Endothelial cell of umbilical vein (primary cell): ENCODE measurements at regions of chr2 and their contacts with region 1.

Region 1: DNA sequence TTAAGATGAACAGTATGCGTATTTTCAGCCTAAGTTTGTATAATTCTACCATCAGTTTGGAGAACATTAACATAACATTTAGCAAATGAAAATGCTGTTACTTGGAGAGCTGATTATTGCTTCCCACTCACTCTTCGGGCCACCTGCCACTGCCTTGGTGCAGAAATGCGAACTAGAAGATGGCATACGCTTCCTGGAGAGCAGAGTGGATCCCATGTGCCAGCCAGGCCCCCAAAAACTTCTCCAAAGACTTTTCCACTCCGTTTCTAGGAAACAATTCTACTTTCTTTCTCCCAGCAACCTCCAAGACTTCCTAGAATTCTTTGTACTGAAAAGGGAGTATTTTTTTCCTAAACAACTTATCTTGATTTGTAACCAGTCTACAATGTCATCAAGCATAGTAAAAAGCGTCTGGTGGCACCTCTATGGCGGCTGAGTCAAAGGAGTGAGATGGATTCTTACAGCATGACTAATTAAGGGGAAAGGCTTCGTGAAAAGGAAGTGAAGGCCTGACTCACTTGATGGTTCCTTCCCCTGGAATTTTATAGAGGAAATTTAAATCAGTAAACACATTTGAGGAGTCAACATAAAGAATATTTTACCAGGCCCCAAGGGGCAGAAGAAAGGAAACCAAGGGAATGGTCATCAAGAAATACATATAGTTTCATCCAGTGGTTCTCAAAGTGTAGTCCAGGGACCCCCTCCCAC is 36.6 kb downstream of the FEZ2 start:
- DNase-seq: peak; percentile 98
- H3K4me3 ChIP-seq: peak overlapping the region in 2 of 3 experiments; percentile 40 to 63
- H3K27ac ChIP-seq: peak overlapping the region; percentile 98
- H3K4me1 ChIP-seq: peaks cover 95% of the 10 kb centered on the region
- H3K27me3 ChIP-seq: no peaks in the 10 kb centered on the region
- CTCF ChIP-seq: no peak
- POLR2A ChIP-seq: no peak

Region 2: GRCh38 chr2:36413218-36413617 is 148.2 kb before region 1 on chr2:
- CTCF ChIA-PET with region 1: no interaction called
- POLR2A ChIA-PET with region 1: no interaction called
- dilution Hi-C with region 1: no loop called
- intact Hi-C with region 1: loop called (anchors 2 kb)
- DNase-seq: peak; percentile 88
- H3K4me3 ChIP-seq: peak overlapping the region in 1 of 3 experiments; percentile 8
- H3K27ac ChIP-seq: peak overlapping the region; percentile 92
- H3K4me1 ChIP-seq: peaks cover 88% of the 10 kb centered on the region
- H3K27me3 ChIP-seq: no peaks in the 10 kb centered on the region
- CTCF ChIP-seq: no peak
- POLR2A ChIP-seq: peak; percentile 78

Region 3: GRCh38 chr2:36544638-36545338 is 16.6 kb before region 1 on chr2:
- CTCF ChIA-PET with region 1: interaction called, 16 read pairs
- POLR2A ChIA-PET with region 1: interaction called, 5 read pairs
- dilution Hi-C with region 1: no loop called
- intact Hi-C with region 1: loop called (anchors 1 kb)
- DNase-seq: no peak
- H3K4me3 ChIP-seq: no peak overlapping the region
- H3K27ac ChIP-seq: peak overlapping the region; percentile 5
- H3K4me1 ChIP-seq: peaks cover 91% of the 10 kb centered on the region
- H3K27me3 ChIP-seq: no peaks in the 10 kb centered on the region
- CTCF ChIP-seq: peak in 1 of 2 donors; percentile 19
- POLR2A ChIP-seq: peak; percentile 62

Region 4: DNA sequence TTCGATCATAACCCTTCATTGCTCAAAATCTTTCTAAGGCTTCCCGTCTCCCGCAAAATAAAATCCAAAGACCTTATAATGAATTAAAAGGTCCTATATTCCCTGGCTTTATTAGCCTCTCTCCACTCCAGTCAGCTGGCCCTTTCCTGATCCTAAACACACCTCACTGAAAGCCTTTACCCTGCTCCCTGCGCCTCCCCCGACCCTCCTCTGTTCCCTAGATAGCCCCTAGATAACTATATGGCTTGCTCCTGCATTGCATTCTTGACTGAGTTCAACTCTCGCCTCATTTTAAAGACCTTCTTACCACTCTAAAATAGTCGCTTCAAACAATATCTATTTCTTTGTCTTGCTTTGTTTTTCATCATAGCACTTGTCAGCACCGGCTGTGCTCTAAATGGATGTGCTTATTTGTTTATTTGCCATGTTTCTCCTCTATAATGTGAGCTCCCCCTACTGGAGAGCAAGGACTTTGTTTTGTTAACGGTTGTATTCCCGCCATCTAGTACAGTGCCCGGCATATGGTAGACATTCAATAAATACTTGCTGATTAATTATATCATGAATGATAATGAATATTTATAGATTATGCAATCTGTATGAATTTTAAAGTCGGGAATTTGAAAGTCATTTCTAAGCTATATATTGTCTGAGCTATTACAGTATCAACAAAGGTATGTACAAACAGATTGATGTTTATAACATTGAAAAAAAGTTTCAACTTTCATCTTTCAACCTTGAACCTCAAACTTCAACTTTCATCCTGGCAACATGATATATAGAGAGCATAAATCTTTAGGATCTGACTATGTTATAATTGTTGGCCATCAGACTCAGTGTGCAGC is 102.7 kb after region 1 on chr2:
- CTCF ChIA-PET with region 1: interaction called, 29 read pairs
- POLR2A ChIA-PET with region 1: interaction called, 4 read pairs
- dilution Hi-C with region 1: no loop called
- intact Hi-C with region 1: loop called (anchors 1 kb)
- DNase-seq: peak; percentile 82
- H3K4me3 ChIP-seq: no peak overlapping the region
- H3K27ac ChIP-seq: peak overlapping the region; percentile 15
- H3K4me1 ChIP-seq: peaks cover 14% of the 10 kb centered on the region
- H3K27me3 ChIP-seq: no peaks in the 10 kb centered on the region
- CTCF ChIP-seq: peak; percentile 53 to 67
- POLR2A ChIP-seq: no peak

Region 5: GRCh38 chr2:36731941-36732648 is 170.7 kb after region 1 on chr2:
- CTCF ChIA-PET with region 1: no interaction called
- POLR2A ChIA-PET with region 1: no interaction called
- dilution Hi-C with region 1: no loop called
- intact Hi-C with region 1: no loop called
- DNase-seq: peak; percentile 22
- H3K4me3 ChIP-seq: no peak overlapping the region
- H3K27ac ChIP-seq: no peak overlapping the region
- H3K4me1 ChIP-seq: no peaks in the 10 kb centered on the region
- H3K27me3 ChIP-seq: no peaks in the 10 kb centered on the region
- CTCF ChIP-seq: no peak
- POLR2A ChIP-seq: no peak

Region 6: DNA sequence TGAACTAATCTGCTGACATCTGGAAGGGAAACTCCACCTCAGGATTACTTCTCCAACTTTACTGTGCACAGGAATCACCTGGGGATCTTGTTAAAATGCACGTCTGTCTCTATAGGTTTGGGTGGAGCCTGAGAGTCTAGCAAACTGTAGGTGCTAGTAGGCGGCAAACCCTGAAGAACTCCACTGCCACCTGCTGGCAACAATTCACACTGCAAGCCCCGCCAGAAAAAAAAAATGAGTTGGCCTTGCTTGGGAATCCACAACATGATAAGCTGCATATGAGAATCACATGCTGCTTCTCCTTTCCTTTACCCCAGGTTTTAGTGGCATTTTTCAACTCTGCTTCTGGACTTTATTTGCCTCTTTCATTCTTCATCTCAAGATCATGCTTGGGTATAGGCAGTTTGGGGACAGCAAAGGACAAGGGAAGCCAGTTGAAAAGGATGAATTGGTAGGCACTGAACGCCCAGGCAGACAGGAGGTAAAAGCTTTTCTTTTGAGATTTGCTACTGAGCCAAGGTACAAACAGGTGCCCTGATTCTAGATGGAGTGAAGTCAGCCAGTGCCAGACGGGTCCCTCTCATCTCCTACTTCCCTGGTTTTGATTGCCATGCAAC is 223.9 kb after region 1 on chr2:
- CTCF ChIA-PET with region 1: interaction called, 3 read pairs
- POLR2A ChIA-PET with region 1: no interaction called
- dilution Hi-C with region 1: no loop called
- intact Hi-C with region 1: loop called (anchors 10 kb)
- DNase-seq: peak; percentile 77
- H3K4me3 ChIP-seq: no peak overlapping the region
- H3K27ac ChIP-seq: no peak overlapping the region
- H3K4me1 ChIP-seq: no peaks in the 10 kb centered on the region
- H3K27me3 ChIP-seq: peaks cover 13 to 22% of the 10 kb centered on the region in 2 experiments
- CTCF ChIP-seq: peak; percentile 84 to 89
- POLR2A ChIP-seq: no peak